ENCODE measurements at regions of chr11 and their contacts with region 1.

Region 1: GRCh38 chr11:115941481-115941993 is 437.3 kb upstream of the CADM1 start:
- DNase-seq: no peak
- H3K4me3 Mint-ChIP-seq: no peak overlapping the region
- H3K27ac Mint-ChIP-seq: peak overlapping the region; percentile 31
- H3K4me1 Mint-ChIP-seq: peaks cover 5% of the 10 kb centered on the region
- H3K27me3 Mint-ChIP-seq: peaks cover 6% of the 10 kb centered on the region

Region 2: GRCh38 chr11:115874843-115875242 is 66.7 kb before region 1 on chr11:
- intact Hi-C with region 1: no loop called
- DNase-seq: no peak
- H3K4me3 Mint-ChIP-seq: no peak overlapping the region
- H3K27ac Mint-ChIP-seq: no peak overlapping the region
- H3K4me1 Mint-ChIP-seq: peaks cover 24% of the 10 kb centered on the region
- H3K27me3 Mint-ChIP-seq: no peaks in the 10 kb centered on the region

Region 3: DNA sequence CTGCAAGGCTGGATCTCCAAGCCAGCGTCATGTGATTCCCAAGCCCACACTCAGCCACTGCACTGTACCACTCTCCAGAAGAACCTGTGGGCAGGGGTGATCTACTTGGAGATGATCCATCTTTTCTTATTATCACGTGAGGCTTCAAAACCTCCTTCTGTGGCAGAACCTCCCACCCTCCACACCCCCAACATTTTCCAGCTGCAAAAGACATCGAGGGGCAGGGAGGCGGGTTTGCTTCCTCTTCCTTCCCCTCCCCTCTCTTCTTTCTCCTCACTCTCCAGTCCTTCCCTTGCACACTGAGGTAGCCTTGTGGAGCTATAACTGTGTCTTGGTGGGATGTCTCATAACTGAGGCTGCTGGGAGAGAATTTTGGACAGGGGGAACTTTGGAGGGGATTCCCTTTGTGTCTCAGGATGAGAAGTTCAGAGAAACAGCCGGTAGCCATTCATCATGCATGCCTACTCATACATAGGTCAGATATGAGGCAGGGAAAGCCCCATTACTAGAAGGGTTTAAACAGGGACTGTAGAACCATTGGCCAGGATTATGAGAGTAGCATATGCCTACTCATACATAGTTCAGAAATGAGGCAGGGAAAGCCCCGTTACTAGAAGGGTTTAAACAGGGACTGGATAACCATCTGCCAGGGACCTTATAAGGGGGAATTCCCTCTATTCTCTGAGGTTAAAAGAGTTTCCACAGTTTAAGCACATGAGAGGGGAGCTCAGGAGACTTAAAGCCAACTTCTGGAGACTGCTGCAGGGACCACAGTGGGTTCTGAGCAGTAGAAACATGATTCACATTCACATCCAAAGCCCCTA is 16.6 kb before region 1 on chr11:
- intact Hi-C with region 1: loop called (anchors 1 kb)
- DNase-seq: peak; percentile 11
- H3K4me3 Mint-ChIP-seq: no peak overlapping the region
- H3K27ac Mint-ChIP-seq: peak overlapping the region; percentile 90
- H3K4me1 Mint-ChIP-seq: peaks cover 53% of the 10 kb centered on the region
- H3K27me3 Mint-ChIP-seq: no peaks in the 10 kb centered on the region

Region 4: GRCh38 chr11:116148056-116148455 is 206.5 kb after region 1 on chr11:
- intact Hi-C with region 1: no loop called
- DNase-seq: no peak
- H3K4me3 Mint-ChIP-seq: no peak overlapping the region
- H3K27ac Mint-ChIP-seq: no peak overlapping the region
- H3K4me1 Mint-ChIP-seq: no peaks in the 10 kb centered on the region
- H3K27me3 Mint-ChIP-seq: peaks cover 2% of the 10 kb centered on the region

Measured in activated T-helper 2 cell treated with anti-CD3 and anti-CD28 coated beads, Interferon-gamma antibody, Interleukin-2, Interleukin-4, amounts not matched to agents 10 μg/mL and 5 μg/mL and 100 μg/mL, durations not matched to agents 14 hours and 24 hours and 36 hours (primary cell).